Activated CD4-positive, alpha-beta T cell treated with anti-CD3 and anti-CD28 coated beads, Interleukin-2, amount 10 ng/mL, durations not matched to agents 24 days and 14 days (primary cell): ENCODE measurements at regions of chr12 and their contacts with region 1.

Region 1: GRCh38 chr12:52023182-52023975 is 16.6 kb downstream of the TAMALIN start:
- DNase-seq: peak; percentile 98
- H3K4me3 Mint-ChIP-seq: peak overlapping the region; percentile 87
- H3K27ac Mint-ChIP-seq: peak overlapping the region; percentile 96
- H3K4me1 Mint-ChIP-seq: peaks cover 39% of the 10 kb centered on the region
- H3K27me3 Mint-ChIP-seq: peaks cover 3% of the 10 kb centered on the region

Region 2: GRCh38 chr12:51970904-51971646 is 52.3 kb before region 1 on chr12:
- intact Hi-C with region 1: loop called (anchors 1 kb)
- DNase-seq: peak; percentile 85
- H3K4me3 Mint-ChIP-seq: peak overlapping the region; percentile 71
- H3K27ac Mint-ChIP-seq: peak overlapping the region; percentile 59
- H3K4me1 Mint-ChIP-seq: peaks cover 54% of the 10 kb centered on the region
- H3K27me3 Mint-ChIP-seq: peaks cover 23% of the 10 kb centered on the region

Region 3: DNA sequence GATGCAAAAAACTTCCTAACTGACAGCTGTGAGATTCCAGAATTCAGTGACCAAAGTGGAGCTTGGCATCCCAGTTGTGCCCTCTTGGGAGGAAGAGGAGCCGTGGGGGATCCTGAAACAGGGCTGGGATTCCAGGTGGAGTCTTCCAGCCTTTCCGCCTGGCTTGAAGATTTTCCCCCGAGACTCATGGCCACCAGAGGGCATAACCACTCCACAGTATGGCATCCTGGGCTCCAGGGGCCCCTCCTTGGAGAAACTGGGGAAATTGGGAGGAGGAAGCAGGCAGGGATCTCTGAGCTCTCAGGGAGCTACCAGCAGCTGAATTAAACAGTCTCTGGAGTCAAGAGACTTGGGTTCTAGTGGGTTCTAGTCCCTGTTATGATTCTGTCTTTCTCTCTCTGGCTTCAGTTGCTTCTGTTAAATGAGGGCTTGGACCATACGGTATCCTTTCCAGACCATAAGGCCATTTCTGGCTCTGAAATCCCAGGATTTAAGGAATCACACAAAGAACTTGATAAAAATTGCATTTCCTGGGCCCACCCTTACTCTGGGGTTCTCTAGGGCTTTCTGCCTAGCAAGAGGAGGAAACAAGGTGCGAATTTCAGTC is 19.2 kb before region 1 on chr12:
- intact Hi-C with region 1: loop called (anchors 1 kb)
- DNase-seq: peak; percentile 68
- H3K4me3 Mint-ChIP-seq: no peak overlapping the region
- H3K27ac Mint-ChIP-seq: no peak overlapping the region
- H3K4me1 Mint-ChIP-seq: peaks cover 21% of the 10 kb centered on the region
- H3K27me3 Mint-ChIP-seq: peaks cover 31% of the 10 kb centered on the region

Region 4: GRCh38 chr12:52069327-52070184 is 46.2 kb after region 1 on chr12 and contains the start of gene ATG101:
- intact Hi-C with region 1: loop called (anchors 1 kb)
- DNase-seq: peak; percentile 96
- H3K4me3 Mint-ChIP-seq: peak within 1 kb of the TSS; percentile 97
- H3K27ac Mint-ChIP-seq: peak within 1 kb of the TSS; percentile 98
- H3K4me1 Mint-ChIP-seq: peaks cover 45% of the 10 kb centered on the region
- H3K27me3 Mint-ChIP-seq: no peaks in the 10 kb centered on the region
- total RNA-seq, gene ATG101: 51.2 and 61.4 TPM in 2 replicates

Region 5: GRCh38 chr12:52121824-52122539 is 98.6 kb after region 1 on chr12:
- intact Hi-C with region 1: loop called (anchors 1 kb)
- DNase-seq: peak; percentile 89
- H3K4me3 Mint-ChIP-seq: no peak overlapping the region
- H3K27ac Mint-ChIP-seq: no peak overlapping the region
- H3K4me1 Mint-ChIP-seq: peaks cover 20% of the 10 kb centered on the region
- H3K27me3 Mint-ChIP-seq: peaks cover 18% of the 10 kb centered on the region